Heart right ventricle (tissue), 16 donors: ENCODE measurements at regions of chr2 and their contacts with region 1.

Region 1: GRCh38 chr2:229780856-229781773 is 66.8 kb upstream of the DNER start:
- DNase-seq: no peak
- ATAC-seq: peak; percentile 28 to 86 (median 74)
- H3K4me3 ChIP-seq: no peak overlapping the region
- H3K27ac ChIP-seq: peak overlapping the region in 1 of 10 donors; percentile 43
- H3K4me1 ChIP-seq: peaks cover 0 to 12% (median 0%) of the 10 kb centered on the region in 9 donors
- H3K27me3 ChIP-seq: no peaks in the 10 kb centered on the region
- CTCF ChIP-seq: peak; percentile 82 to 93 (median 87)

Region 2: GRCh38 chr2:229725716-229726574 is 55.2 kb before region 1 on chr2:
- intact Hi-C with region 1: no loop called
- DNase-seq: no peak
- ATAC-seq: peak in 1 of 8 donors; percentile 31
- H3K4me3 ChIP-seq: no peak overlapping the region
- H3K27ac ChIP-seq: no peak overlapping the region
- H3K4me1 ChIP-seq: no peaks in the 10 kb centered on the region
- H3K27me3 ChIP-seq: peaks cover 0 to 12% (median 5%) of the 10 kb centered on the region in 7 donors
- CTCF ChIP-seq: no peak

Region 3: DNA sequence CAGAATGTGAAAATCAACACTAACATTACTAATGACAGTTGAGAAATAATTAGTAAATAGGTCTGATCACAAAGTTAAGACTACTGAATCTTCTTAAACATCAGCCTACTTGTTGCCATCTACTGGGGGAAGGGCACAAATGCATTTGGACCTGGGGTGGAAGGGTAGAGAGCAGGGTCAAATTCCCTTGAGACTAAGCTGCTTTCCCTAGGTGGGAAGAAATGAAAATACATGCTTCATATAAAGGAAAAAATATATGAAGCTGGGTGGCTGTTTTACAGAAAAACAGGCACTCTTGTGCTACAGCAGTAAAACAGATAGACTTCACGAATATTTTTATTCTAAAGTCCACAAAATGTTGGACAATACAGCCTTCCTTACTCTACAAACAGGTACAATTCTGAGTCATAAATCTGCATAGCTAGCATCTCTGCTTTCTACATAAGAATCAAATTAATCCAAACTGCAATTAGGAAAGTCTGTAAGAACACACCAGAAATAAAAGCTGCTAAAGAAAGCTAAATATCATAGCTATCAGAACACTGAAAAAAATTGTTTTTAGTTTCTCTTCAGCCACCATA is 129.8 kb after region 1 on chr2:
- intact Hi-C with region 1: loop called in 1 of 10 experiments (anchors 5 kb)
- DNase-seq: no peak
- ATAC-seq: peak in 1 of 8 donors; percentile 51
- H3K4me3 ChIP-seq: no peak overlapping the region
- H3K27ac ChIP-seq: no peak overlapping the region
- H3K4me1 ChIP-seq: peaks cover 2 to 86% (median 63%) of the 10 kb centered on the region in 9 donors
- H3K27me3 ChIP-seq: no peaks in the 10 kb centered on the region
- CTCF ChIP-seq: peak in 6 of 9 donors; percentile 9 to 50 (median 42)